ENCODE measurements at regions of chr1 and their contacts with region 1.

Region 1: DNA sequence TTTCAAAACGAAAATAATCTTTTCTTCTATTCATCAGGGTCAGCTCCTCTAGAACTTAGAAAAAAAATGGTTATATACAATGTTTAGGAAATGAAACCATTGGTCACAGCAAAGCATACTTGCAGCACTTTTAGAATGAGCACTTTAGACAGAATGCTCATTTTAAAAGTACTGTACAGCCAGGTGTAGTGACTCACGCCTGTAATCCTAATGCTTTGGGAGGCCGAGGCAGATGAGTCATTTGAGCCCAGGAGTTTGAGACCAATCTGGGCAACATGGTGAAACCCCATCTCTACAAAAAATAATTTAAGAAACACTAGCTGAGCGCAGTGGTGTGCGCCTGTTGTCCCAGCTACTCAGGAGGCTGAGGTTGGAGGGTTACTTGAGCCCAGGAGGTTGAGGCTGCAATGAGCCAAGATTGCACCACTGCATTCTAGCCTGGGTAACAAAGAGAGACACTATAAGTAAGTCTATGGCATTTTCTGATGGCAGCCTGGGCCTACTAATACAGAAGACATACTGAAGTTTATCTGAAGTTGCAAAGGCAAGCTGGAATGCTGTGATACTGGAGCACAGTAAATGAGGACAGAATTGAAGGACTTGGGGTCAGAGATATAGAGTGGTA is 48.9 kb upstream of the ZNF326 start:
- DNase-seq: no peak
- H3K4me3 ChIP-seq: no peak overlapping the region
- H3K4me1 ChIP-seq: peaks cover 39% of the 10 kb centered on the region
- H3K27me3 ChIP-seq: no peaks in the 10 kb centered on the region

Region 2: DNA sequence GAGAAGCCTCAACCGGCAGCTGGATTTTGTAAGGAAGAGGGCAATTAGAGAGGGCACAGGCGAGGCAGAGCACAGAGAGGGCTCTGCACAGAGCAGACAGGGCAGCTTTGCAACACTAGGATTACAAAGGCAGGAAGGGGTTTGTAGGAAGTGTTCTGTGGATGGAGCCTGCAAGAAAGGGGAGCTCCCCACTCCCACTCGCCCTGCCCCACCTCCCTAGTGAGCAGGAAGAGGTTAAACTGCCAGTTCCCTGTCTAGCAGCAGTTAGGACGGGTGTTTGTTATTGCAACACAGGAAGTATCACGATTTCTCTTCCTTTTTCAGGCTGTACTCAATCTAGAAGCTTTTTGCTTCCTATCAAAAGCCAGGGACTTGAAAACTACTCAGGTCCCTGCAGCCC is 188.4 kb before region 1 on chr1:
- in situ Hi-C with region 1: no loop called
- DNase-seq: no peak
- H3K4me3 ChIP-seq: no peak overlapping the region
- H3K4me1 ChIP-seq: no peaks in the 10 kb centered on the region
- H3K27me3 ChIP-seq: peaks cover 8% of the 10 kb centered on the region

Region 3: GRCh38 chr1:89865498-89866385 is 80.2 kb before region 1 on chr1:
- in situ Hi-C with region 1: loop called (anchors 10 kb)
- DNase-seq: no peak
- H3K4me3 ChIP-seq: no peak overlapping the region
- H3K4me1 ChIP-seq: peaks cover 26% of the 10 kb centered on the region
- H3K27me3 ChIP-seq: no peaks in the 10 kb centered on the region

Measured in HAP-1 (cell line).